Heart right ventricle (tissue), 16 donors: ENCODE measurements at regions of chr19 and their contacts with region 1.

Region 1: DNA sequence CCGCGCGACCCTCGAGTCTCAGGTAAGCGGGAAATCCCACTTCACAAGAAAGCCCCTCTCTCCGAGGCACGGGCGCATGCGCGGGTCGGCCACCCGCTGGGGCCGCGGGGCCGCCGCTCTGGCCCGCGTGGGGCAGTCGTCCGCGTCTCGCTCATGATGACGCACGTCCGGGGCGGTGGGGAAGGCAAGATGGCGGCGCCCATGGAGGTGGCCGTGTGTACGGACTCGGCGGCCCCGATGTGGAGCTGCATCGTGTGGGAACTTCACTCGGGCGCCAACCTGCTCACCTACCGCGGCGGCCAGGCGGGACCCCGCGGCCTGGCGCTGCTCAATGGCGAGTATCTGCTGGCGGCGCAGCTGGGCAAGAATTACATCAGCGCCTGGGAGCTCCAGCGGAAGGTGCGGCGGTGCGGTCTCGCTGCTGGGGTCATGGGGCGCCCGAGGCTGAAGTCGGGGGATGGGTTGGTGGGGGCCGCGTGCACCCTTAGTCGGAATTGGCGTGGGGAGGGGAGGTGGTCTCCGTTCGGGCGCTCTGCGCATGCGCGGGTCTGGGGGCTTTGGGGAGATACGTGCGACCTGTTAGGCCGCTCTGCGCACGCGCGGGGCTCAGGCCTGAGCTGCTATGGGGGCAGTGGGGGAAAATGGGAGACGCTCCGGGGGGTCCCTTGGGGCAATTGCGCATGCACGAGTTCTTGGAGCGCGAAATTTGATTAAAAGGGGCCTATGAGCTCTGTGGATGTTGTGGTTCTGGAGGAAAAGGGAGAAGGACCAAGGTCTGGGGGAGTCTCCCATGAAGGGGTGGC is at the start of gene WDR18:
- DNase-seq: peak; percentile 94 to 95
- ATAC-seq: peak; percentile 92 to 97 (median 96)
- H3K4me3 ChIP-seq: peak within 1 kb of the TSS; percentile 49 to 99 (median 94)
- H3K27ac ChIP-seq: peak within 1 kb of the TSS in 9 of 10 donors; percentile 77 to 92 (median 87)
- H3K4me1 ChIP-seq: peaks cover 4 to 36% (median 22%) of the 10 kb centered on the region in 9 donors
- H3K27me3 ChIP-seq: no peaks in the 10 kb centered on the region
- CTCF ChIP-seq: peak in 6 of 9 donors; percentile 14 to 48 (median 35)
- total RNA-seq, gene WDR18: 17.3 to 25.0 (median 20.3) TPM

Region 2: GRCh38 chr19:850221-850978 is 134.0 kb before region 1 on chr19:
- intact Hi-C with region 1: loop called in 2 of 10 experiments (anchors 5 to 10 kb)
- DNase-seq: peak; percentile 90 to 92
- ATAC-seq: peak; percentile 85 to 93 (median 90)
- H3K4me3 ChIP-seq: peak overlapping the region in 6 of 10 donors; percentile 0 to 21 (median 8)
- H3K27ac ChIP-seq: peak overlapping the region; percentile 60 to 84 (median 79)
- H3K4me1 ChIP-seq: peaks cover 7 to 34% (median 13%) of the 10 kb centered on the region in 9 donors
- H3K27me3 ChIP-seq: peaks cover 0 to 59% (median 52%) of the 10 kb centered on the region in 7 donors
- CTCF ChIP-seq: no peak